Panc1 (cell line): ENCODE measurements at regions of chr2 and their contacts with region 1.

Region 1: GRCh38 chr2:55408918-55409868 is 10.5 kb downstream of the CCDC88A start:
- DNase-seq: no peak
- ATAC-seq: no peak
- H3K4me3 ChIP-seq: no peak overlapping the region
- H3K27ac ChIP-seq: no peak overlapping the region
- H3K4me1 ChIP-seq: no peaks in the 10 kb centered on the region
- H3K27me3 ChIP-seq: no peaks in the 10 kb centered on the region
- CTCF ChIP-seq: no peak

Region 2: GRCh38 chr2:55099878-55100820 is 309.0 kb before region 1 on chr2:
- CTCF ChIA-PET with region 1: no interaction called
- POLR2A ChIA-PET with region 1: no interaction called
- in situ Hi-C with region 1: no loop called
- intact Hi-C with region 1: no loop called
- DNase-seq: no peak
- ATAC-seq: no peak
- H3K4me3 ChIP-seq: no peak overlapping the region
- H3K27ac ChIP-seq: peak overlapping the region; percentile 80; the same call in 1 of the 2 replicates
- H3K4me1 ChIP-seq: peaks cover 14% of the 10 kb centered on the region
- H3K27me3 ChIP-seq: no peaks in the 10 kb centered on the region
- CTCF ChIP-seq: no peak

Region 3: GRCh38 chr2:55357927-55358326 is 51.3 kb before region 1 on chr2:
- CTCF ChIA-PET with region 1: no interaction called
- POLR2A ChIA-PET with region 1: interaction called, 10 read pairs
- in situ Hi-C with region 1: no loop called
- intact Hi-C with region 1: no loop called
- DNase-seq: no peak
- ATAC-seq: no peak
- H3K4me3 ChIP-seq: no peak overlapping the region
- H3K27ac ChIP-seq: no peak overlapping the region
- H3K4me1 ChIP-seq: no peaks in the 10 kb centered on the region
- H3K27me3 ChIP-seq: no peaks in the 10 kb centered on the region
- CTCF ChIP-seq: no peak

Region 4: GRCh38 chr2:55384786-55385185 is 24.4 kb before region 1 on chr2:
- CTCF ChIA-PET with region 1: no interaction called
- POLR2A ChIA-PET with region 1: no interaction called
- in situ Hi-C with region 1: no loop called
- intact Hi-C with region 1: no loop called
- DNase-seq: no peak
- ATAC-seq: no peak
- H3K4me3 ChIP-seq: no peak overlapping the region
- H3K27ac ChIP-seq: no peak overlapping the region
- H3K4me1 ChIP-seq: no peaks in the 10 kb centered on the region
- H3K27me3 ChIP-seq: no peaks in the 10 kb centered on the region
- CTCF ChIP-seq: no peak

Region 5: DNA sequence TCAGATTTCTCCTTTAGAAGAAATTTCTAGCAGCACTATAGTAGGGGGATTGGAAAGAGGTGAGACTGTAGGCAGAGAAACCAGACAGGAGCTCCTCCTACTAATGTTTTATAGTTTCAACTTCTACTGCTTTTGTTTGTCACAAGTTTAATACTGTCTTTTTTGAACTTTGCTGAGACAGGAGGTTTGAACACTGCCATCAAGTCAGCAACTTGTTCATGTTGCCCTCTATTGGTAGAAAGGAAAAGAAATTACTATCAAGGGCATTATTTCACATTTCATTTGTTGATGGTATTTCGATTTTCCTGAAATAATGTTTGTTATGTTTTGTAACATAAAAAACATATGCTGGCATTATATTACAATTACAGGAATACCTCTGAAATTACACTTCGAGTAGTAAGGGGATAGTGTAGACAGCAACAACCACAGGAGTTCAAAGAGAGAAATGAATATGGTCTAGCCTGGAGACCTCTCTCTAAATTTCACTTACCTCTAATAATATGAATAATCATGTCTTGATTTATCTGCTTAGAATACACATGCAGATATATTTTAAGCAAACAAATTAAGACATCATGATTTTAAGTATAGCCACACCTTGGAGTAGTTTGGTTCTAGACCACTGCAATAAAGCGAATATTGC is 22.9 kb after region 1 on chr2:
- CTCF ChIA-PET with region 1: no interaction called
- POLR2A ChIA-PET with region 1: interaction called, 17 read pairs
- in situ Hi-C with region 1: no loop called
- intact Hi-C with region 1: no loop called
- DNase-seq: no peak
- ATAC-seq: peak; percentile 82; the same call in 1 of the 2 replicates
- H3K4me3 ChIP-seq: no peak overlapping the region
- H3K27ac ChIP-seq: no peak overlapping the region
- H3K4me1 ChIP-seq: no peaks in the 10 kb centered on the region
- H3K27me3 ChIP-seq: no peaks in the 10 kb centered on the region
- CTCF ChIP-seq: peak; percentile 75; the same call in 1 of the 2 replicates